ENCODE measurements at regions of chr18 and their contacts with region 1.

Region 1: DNA sequence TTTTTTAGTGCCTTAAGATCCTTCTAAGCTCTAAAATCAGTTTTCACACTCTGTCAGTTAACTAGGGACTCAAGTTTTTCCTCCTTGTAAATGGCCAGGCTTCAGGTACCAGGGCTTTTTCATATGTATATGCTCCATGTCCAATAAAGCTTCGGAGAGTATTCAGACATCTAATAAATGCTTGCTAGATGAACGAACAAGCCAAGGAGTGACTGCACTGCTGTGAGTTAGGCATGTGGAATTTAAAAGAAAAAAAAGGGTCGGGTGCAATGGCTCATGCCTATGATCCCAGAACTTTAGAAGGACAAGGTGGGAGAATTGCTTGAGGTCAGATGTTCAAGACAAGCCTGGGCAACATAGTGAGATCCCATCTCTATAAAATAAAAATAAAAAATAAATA is 81.9 kb downstream of the CDH2 start:
- DNase-seq: peak; percentile 77
- ATAC-seq: peak; percentile 71
- H3K4me3 ChIP-seq: no peak overlapping the region
- H3K27ac ChIP-seq: no peak overlapping the region
- H3K4me1 ChIP-seq: no peaks in the 10 kb centered on the region
- H3K27me3 ChIP-seq: no peaks in the 10 kb centered on the region
- CTCF ChIP-seq: no peak
- POLR2A ChIP-seq: no peak
- RAD21 ChIP-seq: no peak

Region 2: DNA sequence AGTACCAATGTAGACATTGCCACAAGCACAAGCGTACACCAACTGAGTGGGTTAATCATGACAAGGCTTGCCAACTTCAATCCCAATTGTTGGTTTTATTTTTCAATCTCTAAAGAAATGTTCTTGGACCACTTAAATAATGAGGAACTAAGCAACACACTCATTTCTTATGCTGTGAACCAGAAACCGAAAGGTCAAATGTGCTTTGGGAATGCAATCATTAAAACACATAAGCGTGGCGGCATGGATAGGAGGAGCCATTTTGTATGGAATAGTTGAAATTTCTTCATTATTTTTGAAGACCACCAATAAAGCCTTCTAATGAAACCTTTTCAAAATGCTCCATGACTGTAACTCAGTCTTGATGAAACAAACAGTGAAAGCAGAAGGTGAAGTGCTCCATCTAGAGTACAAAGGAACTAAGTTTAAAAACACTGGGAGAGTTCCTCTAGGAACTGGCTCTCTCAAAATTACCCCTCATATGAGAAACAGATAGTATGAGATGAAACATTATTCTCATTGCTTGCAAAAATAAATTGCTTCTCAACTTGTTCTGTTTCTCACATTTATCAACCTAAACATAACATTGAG is 796.7 kb before region 1 on chr18:
- CTCF ChIA-PET with region 1: no interaction called
- POLR2A ChIA-PET with region 1: no interaction called
- dilution Hi-C with region 1: no loop called
- in situ Hi-C with region 1: no loop called
- intact Hi-C with region 1: no loop called
- DNase-seq: no peak
- ATAC-seq: no peak
- H3K4me3 ChIP-seq: no peak overlapping the region
- H3K27ac ChIP-seq: no peak overlapping the region
- H3K4me1 ChIP-seq: no peaks in the 10 kb centered on the region
- H3K27me3 ChIP-seq: no peaks in the 10 kb centered on the region
- CTCF ChIP-seq: no peak
- POLR2A ChIP-seq: no peak
- RAD21 ChIP-seq: no peak

Region 3: DNA sequence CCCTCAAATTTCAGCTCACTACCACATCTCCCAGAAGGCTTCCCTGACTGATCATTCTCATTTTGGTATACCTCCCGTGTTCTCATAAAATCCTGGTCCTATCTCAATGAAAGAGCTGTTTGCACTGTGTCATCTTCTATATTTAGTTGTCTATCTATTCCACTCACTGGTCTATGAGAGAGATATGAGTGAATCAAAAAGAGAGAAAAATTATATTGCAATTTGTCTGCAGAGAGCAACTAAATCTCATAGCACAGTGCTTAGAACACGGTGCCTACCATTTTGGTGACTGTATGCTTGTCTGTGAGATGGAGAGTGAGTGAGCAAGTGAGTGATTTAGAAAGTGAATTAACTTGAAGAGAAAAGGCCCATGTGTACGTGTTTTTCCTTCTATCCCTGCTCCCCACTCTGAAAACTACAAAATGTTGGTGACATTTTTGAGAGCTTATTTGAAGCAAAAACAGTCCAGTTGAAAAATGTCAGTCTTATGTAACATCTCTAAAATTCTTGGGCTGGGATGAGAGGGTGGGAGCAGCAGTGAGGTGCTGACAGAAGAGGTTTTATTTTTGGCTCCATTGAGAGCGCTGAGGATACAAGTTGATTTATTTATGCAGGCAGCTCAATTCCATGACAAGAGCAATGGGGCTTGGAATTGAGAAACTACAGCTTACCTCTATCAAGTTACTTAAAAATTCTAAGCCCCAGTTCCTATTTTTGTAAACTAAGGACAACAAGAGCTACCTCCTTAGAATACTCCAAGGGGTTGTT is 536.5 kb before region 1 on chr18:
- CTCF ChIA-PET with region 1: no interaction called
- POLR2A ChIA-PET with region 1: no interaction called
- dilution Hi-C with region 1: no loop called
- in situ Hi-C with region 1: no loop called
- intact Hi-C with region 1: no loop called
- DNase-seq: no peak
- ATAC-seq: no peak
- H3K4me3 ChIP-seq: no peak overlapping the region
- H3K27ac ChIP-seq: no peak overlapping the region
- H3K4me1 ChIP-seq: no peaks in the 10 kb centered on the region
- H3K27me3 ChIP-seq: no peaks in the 10 kb centered on the region
- CTCF ChIP-seq: no peak
- POLR2A ChIP-seq: no peak
- RAD21 ChIP-seq: no peak

Region 4: DNA sequence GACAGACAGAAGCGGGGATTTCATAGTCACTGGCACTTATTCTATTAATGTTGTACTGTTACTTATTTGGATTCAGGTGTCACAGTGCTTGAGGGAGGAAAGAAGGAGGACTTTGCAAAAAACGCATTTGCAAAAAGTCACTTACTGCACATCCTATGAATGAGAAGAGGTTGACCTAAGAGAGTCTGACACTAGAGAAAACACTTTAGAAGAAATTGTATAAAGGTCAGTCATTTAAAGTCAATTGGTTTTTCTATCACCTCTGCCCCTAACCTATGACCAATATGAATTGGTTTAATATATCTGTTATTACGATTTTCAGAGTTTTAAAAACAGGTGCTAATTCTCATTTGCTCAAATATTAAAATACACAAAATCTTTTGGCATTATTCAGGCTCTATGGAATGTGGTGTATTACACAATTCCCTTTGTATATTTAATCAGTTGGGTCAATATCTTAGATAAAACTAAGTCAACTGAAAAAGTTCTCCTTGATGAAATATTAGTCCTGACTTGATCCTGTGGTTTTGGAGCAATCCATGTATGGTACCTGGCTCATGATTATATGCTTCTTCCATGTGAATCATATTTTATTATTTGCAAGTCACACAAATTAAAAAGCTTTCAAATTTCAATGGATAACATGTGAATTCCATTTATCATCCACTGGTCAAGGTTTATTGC is 75.5 kb before region 1 on chr18:
- CTCF ChIA-PET with region 1: no interaction called
- POLR2A ChIA-PET with region 1: no interaction called
- dilution Hi-C with region 1: no loop called
- in situ Hi-C with region 1: no loop called
- intact Hi-C with region 1: loop called (anchors 5 kb)
- DNase-seq: peak; percentile 35
- ATAC-seq: no peak; the same call in 1 of the 2 replicates
- H3K4me3 ChIP-seq: no peak overlapping the region
- H3K27ac ChIP-seq: no peak overlapping the region
- H3K4me1 ChIP-seq: no peaks in the 10 kb centered on the region
- H3K27me3 ChIP-seq: no peaks in the 10 kb centered on the region
- CTCF ChIP-seq: no peak
- POLR2A ChIP-seq: no peak
- RAD21 ChIP-seq: no peak

Region 5: DNA sequence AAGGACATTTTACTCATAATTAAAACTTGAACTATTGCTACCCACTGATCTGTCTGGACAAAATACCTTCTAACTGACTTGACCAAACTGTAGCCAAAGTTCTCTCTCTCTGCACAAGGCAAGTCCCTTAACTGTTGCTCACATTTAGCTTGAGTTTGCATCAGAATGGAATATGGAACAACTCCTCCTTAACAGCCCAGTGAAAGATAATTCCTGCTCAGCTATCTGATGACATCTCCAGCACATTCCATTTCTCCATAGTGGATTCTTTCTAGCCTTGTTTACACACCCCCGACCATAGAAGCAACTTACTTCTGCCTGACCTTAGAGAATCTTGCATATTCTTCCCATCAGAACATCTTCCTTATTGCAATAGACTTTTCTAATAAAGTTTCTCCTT is 399.1 kb after region 1 on chr18:
- CTCF ChIA-PET with region 1: no interaction called
- POLR2A ChIA-PET with region 1: no interaction called
- dilution Hi-C with region 1: no loop called
- in situ Hi-C with region 1: no loop called
- intact Hi-C with region 1: no loop called
- DNase-seq: peak; percentile 4
- ATAC-seq: peak; percentile 71
- H3K4me3 ChIP-seq: no peak overlapping the region
- H3K27ac ChIP-seq: no peak overlapping the region
- H3K4me1 ChIP-seq: no peaks in the 10 kb centered on the region
- H3K27me3 ChIP-seq: no peaks in the 10 kb centered on the region
- CTCF ChIP-seq: no peak
- POLR2A ChIP-seq: no peak
- RAD21 ChIP-seq: no peak